Activated CD4-positive, alpha-beta T cell treated with anti-CD3 and anti-CD28 coated beads for 36 hours (primary cell): ENCODE measurements at regions of chr12 and their contacts with region 1.

Region 1: DNA sequence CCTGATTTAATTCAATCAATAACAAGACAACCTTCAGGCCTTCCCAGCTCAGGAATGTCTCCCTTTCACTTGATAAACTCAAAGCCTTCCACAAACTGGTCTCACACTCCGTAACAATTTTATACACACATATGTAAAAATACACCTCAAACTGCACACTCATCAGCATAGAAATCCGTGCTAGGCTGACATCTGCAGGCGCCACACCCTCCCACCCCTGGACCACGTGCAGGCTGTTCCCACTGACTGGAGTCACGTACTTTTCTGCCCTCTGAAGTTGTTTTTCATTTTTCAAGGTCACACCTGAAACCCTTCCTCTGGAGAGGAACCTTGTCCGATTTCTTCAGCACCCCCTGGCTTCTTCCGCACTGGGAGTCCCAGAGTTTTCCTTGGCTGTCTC is 27.6 kb downstream of the FBXO21 start:
- DNase-seq: no peak
- ATAC-seq: no peak
- H3K4me3 Mint-ChIP-seq: no peak overlapping the region
- H3K27ac Mint-ChIP-seq: no peak overlapping the region
- H3K4me1 Mint-ChIP-seq: no peaks in the 10 kb centered on the region
- H3K27me3 Mint-ChIP-seq: no peaks in the 10 kb centered on the region

Region 2: GRCh38 chr12:116977465-116978380 is 184.9 kb before region 1 on chr12:
- CTCF ChIA-PET with region 1: no interaction called
- POLR2A ChIA-PET with region 1: no interaction called
- intact Hi-C with region 1: no loop called
- DNase-seq: no peak
- ATAC-seq: no peak
- H3K4me3 Mint-ChIP-seq: no peak overlapping the region
- H3K27ac Mint-ChIP-seq: no peak overlapping the region
- H3K4me1 Mint-ChIP-seq: peaks cover 6% of the 10 kb centered on the region
- H3K27me3 Mint-ChIP-seq: no peaks in the 10 kb centered on the region

Region 3: DNA sequence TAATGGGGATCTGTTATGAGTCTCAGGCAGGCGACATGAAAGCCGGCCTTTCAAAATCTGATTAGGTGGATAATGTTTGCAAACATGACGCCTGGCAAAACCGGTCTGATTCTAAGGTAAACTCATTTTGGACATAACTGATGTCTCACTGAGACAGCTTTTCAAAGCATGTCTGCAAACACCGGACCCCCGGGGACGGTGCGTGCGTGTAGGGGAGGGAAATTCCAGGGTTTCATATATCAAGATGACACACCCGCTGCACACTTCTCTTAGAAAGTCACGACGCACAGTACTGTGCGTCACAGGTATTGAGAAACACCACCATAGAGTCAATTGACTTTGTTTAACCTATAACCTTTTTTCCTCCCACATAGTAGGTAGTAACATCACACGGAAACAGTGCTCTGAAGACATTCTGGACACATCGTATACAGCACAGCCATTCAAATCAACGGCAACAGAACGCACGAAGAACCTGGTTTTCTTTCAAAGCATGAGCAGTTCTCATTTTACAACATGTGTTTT is 19.6 kb before region 1 on chr12:
- CTCF ChIA-PET with region 1: no interaction called
- POLR2A ChIA-PET with region 1: no interaction called
- intact Hi-C with region 1: no loop called
- DNase-seq: no peak
- ATAC-seq: peak; percentile 55
- H3K4me3 Mint-ChIP-seq: no peak overlapping the region
- H3K27ac Mint-ChIP-seq: peak overlapping the region; percentile 34
- H3K4me1 Mint-ChIP-seq: peaks cover 4% of the 10 kb centered on the region
- H3K27me3 Mint-ChIP-seq: no peaks in the 10 kb centered on the region

Region 4: GRCh38 chr12:117178301-117178700 is 15.7 kb after region 1 on chr12:
- CTCF ChIA-PET with region 1: interaction called, 7 read pairs
- POLR2A ChIA-PET with region 1: interaction called, 10 read pairs
- intact Hi-C with region 1: no loop called
- DNase-seq: no peak
- ATAC-seq: no peak
- H3K4me3 Mint-ChIP-seq: no peak overlapping the region
- H3K27ac Mint-ChIP-seq: no peak overlapping the region
- H3K4me1 Mint-ChIP-seq: peaks cover 11% of the 10 kb centered on the region
- H3K27me3 Mint-ChIP-seq: no peaks in the 10 kb centered on the region